ENCODE measurements at regions of chr4 and their contacts with region 1.

Region 1: GRCh38 chr4:180664766-180665368 is 1578.3 kb upstream of the TENM3 start:
- DNase-seq: peak; percentile 85
- H3K4me3 ChIP-seq: no peak overlapping the region
- H3K27ac ChIP-seq: no peak overlapping the region
- H3K27me3 ChIP-seq: no peaks in the 10 kb centered on the region
- CTCF ChIP-seq: peak; percentile 88

Region 2: DNA sequence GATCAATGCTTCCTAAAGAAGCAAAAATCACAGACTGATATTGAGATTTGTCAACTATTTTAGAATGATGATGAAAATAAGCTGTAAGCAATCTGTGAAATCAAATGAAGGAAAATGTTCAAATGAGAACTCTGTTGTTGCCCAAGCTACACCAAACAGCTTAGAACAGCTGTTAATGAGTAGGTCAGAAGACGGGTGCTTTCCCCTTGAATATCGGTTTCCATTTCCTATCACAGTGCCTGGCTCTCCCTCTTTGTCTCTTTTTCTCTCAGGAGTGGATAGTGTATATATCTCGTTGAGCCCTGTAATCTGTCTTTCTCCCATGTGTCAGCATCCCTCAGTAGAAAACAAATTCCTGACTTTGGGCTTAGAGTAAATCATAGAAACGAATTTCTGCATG is 14.6 kb before region 1 on chr4:
- CTCF ChIA-PET with region 1: interaction called, 50 read pairs
- POLR2A ChIA-PET with region 1: no interaction called
- DNase-seq: no peak
- H3K4me3 ChIP-seq: no peak overlapping the region
- H3K27ac ChIP-seq: no peak overlapping the region
- H3K27me3 ChIP-seq: no peaks in the 10 kb centered on the region
- CTCF ChIP-seq: no peak

Region 3: GRCh38 chr4:180695851-180696250 is 31.0 kb after region 1 on chr4:
- CTCF ChIA-PET with region 1: interaction called, 11 read pairs
- POLR2A ChIA-PET with region 1: no interaction called
- DNase-seq: peak; percentile 93
- H3K4me3 ChIP-seq: no peak overlapping the region
- H3K27ac ChIP-seq: no peak overlapping the region
- H3K27me3 ChIP-seq: no peaks in the 10 kb centered on the region
- CTCF ChIP-seq: no peak

Region 4: GRCh38 chr4:180811556-180811955 is 146.7 kb after region 1 on chr4:
- CTCF ChIA-PET with region 1: interaction called, 12 read pairs
- POLR2A ChIA-PET with region 1: no interaction called
- DNase-seq: no peak
- H3K4me3 ChIP-seq: no peak overlapping the region
- H3K27ac ChIP-seq: no peak overlapping the region
- H3K27me3 ChIP-seq: no peaks in the 10 kb centered on the region
- CTCF ChIP-seq: no peak

Region 5: GRCh38 chr4:180940680-180941079 is 275.8 kb after region 1 on chr4:
- CTCF ChIA-PET with region 1: interaction called, 56 read pairs
- POLR2A ChIA-PET with region 1: no interaction called
- DNase-seq: no peak
- H3K4me3 ChIP-seq: no peak overlapping the region
- H3K27ac ChIP-seq: no peak overlapping the region
- H3K27me3 ChIP-seq: no peaks in the 10 kb centered on the region
- CTCF ChIP-seq: no peak

Measured in AG04450 (cell line).